ENCODE measurements at regions of chr18 and their contacts with region 1.

Region 1: GRCh38 chr18:59783138-59783537 is 85.9 kb upstream of the CCBE1 start:
- DNase-seq: no peak
- ATAC-seq: no peak
- H3K4me3 ChIP-seq: no peak overlapping the region
- H3K27ac ChIP-seq: no peak overlapping the region
- H3K4me1 ChIP-seq: no peaks in the 10 kb centered on the region
- H3K27me3 ChIP-seq: no peaks in the 10 kb centered on the region
- CTCF ChIP-seq: no peak
- POLR2A ChIP-seq: no peak

Region 2: GRCh38 chr18:59697236-59697932 is 85.8 kb before region 1 on chr18 and contains the start of gene CCBE1:
- in situ Hi-C with region 1: loop called in 1 of 4 experiments (anchors 25 kb)
- intact Hi-C with region 1: no loop called
- DNase-seq: peak in 1 of 2 donors; percentile 18
- ATAC-seq: peak; percentile 30 to 65
- H3K4me3 ChIP-seq: peak within 1 kb of the TSS; percentile 33 to 47 (median 40)
- H3K27ac ChIP-seq: no peak within 1 kb of the TSS
- H3K4me1 ChIP-seq: peaks cover 0 to 3% of the 10 kb centered on the region in 2 donors
- H3K27me3 ChIP-seq: peaks cover 28 to 35% (median 30%) of the 10 kb centered on the region in 3 donors
- CTCF ChIP-seq: peak; percentile 24 to 68 (median 52)
- POLR2A ChIP-seq: no peak
- total RNA-seq, gene CCBE1: 0.44 to 2.7 (median 1.3) TPM

Region 3: GRCh38 chr18:59837586-59837985 is 54.4 kb after region 1 on chr18:
- in situ Hi-C with region 1: no loop called
- intact Hi-C with region 1: no loop called
- DNase-seq: no peak
- ATAC-seq: no peak
- H3K4me3 ChIP-seq: no peak overlapping the region
- H3K27ac ChIP-seq: no peak overlapping the region
- H3K4me1 ChIP-seq: no peaks in the 10 kb centered on the region
- H3K27me3 ChIP-seq: no peaks in the 10 kb centered on the region
- CTCF ChIP-seq: peak; percentile 24 to 71 (median 40)
- POLR2A ChIP-seq: no peak

Region 4: GRCh38 chr18:61173554-61173953 is 1390.4 kb after region 1 on chr18:
- in situ Hi-C with region 1: no loop called
- intact Hi-C with region 1: no loop called
- DNase-seq: no peak
- ATAC-seq: no peak
- H3K4me3 ChIP-seq: no peak overlapping the region
- H3K27ac ChIP-seq: no peak overlapping the region
- H3K4me1 ChIP-seq: no peaks in the 10 kb centered on the region
- H3K27me3 ChIP-seq: no peaks in the 10 kb centered on the region
- CTCF ChIP-seq: no peak
- POLR2A ChIP-seq: no peak